Right ventricle myocardium inferior (tissue), 1 donor: ENCODE measurements at regions of chr6 and their contacts with region 1.

Region 1: DNA sequence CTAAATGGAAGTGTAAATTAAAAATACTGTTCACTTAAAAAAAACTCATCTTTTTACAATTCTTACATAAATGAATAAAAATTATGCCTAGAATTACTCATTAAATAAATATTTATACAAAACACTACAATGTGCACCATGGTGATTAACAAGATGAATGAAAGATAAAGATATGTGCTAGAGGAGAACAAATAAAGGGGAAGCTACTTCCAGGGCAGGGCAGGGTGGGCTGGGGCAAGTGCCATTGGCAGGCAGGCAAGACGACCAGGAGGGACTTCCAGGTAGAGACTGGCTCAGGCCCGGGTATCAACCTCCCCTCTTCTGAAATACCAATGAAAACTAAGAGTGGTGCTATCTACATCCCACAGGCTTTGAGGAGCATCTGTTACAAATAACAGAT is 20.4 kb downstream of the PREP start:
- DNase-seq: no peak
- ATAC-seq: no peak

Region 2: GRCh38 chr6:105136431-105137350 is 245.8 kb before region 1 on chr6:
- intact Hi-C with region 1: no loop called
- DNase-seq: peak; percentile 78
- ATAC-seq: peak; percentile 85

Region 3: GRCh38 chr6:105402939-105403935 is 20.7 kb after region 1 on chr6 and contains the start of gene PREP:
- intact Hi-C with region 1: loop called (anchors 2 kb)
- DNase-seq: peak; percentile 95
- ATAC-seq: peak; percentile 97
- total RNA-seq, gene PREP: 26.6 TPM

Region 4: DNA sequence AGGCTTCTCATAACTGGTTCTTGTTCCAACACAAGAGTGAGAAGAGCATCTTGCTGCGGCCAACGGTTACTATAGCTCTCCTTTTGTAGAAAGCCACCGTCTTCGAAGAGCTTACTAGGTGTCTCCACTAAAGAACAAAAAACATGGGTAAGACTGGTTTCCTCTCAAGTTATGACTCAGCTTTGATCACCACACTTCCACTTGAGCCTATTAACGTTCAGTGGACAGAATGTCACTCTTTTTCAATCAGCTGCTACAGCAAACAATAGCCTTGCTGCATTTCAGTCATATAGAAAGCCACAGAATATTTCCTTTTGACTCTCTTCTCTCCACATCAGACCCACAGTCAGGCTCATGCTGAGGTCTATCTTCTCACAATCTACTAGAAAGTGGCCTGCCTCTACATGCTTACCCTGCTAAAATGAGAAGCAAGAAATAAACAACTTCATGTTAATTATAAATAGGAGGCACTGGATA is 263.9 kb after region 1 on chr6:
- intact Hi-C with region 1: no loop called
- DNase-seq: no peak
- ATAC-seq: no peak